Activated CD4-positive, alpha-beta T cell treated with anti-CD3 and anti-CD28 coated beads for 36 hours (primary cell): ENCODE measurements at regions of chr12 and their contacts with region 1.

Region 1: DNA sequence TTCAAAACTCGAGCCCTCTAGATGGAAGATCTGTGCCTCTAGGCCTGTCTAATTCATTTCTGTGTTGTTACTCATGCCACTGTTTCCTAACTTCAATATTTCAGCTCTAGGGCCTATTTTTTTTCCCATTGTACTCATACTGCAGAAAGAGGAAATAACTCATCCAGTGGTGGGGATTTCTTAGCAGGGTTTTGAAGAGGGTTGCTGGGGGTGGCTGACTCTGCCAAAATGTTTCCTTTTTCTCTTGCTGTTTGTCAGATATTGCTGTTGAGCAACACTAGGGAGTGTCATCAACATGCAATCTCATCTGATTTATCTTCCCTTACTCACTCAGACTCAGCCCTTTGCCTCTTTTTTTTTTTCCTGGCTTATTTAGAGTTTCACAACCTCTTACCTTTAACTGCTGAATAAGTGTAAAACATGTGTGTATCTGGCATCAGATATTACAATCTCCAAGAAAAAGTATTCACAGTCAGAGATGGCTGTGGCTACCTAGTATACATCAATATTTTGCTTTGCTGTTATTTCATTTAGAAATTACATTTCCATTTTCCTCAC is 189.5 kb downstream of the DUSP6 start:
- DNase-seq: peak; percentile 82
- ATAC-seq: peak; percentile 91
- H3K4me3 Mint-ChIP-seq: no peak overlapping the region
- H3K27ac Mint-ChIP-seq: no peak overlapping the region
- H3K4me1 Mint-ChIP-seq: peaks cover 14% of the 10 kb centered on the region
- H3K27me3 Mint-ChIP-seq: no peaks in the 10 kb centered on the region

Region 2: GRCh38 chr12:88793096-88793495 is 369.7 kb before region 1 on chr12:
- CTCF ChIA-PET with region 1: no interaction called
- POLR2A ChIA-PET with region 1: no interaction called
- intact Hi-C with region 1: no loop called
- DNase-seq: no peak
- ATAC-seq: no peak
- H3K4me3 Mint-ChIP-seq: no peak overlapping the region
- H3K27ac Mint-ChIP-seq: no peak overlapping the region
- H3K4me1 Mint-ChIP-seq: no peaks in the 10 kb centered on the region
- H3K27me3 Mint-ChIP-seq: peaks cover 2% of the 10 kb centered on the region

Region 3: GRCh38 chr12:89073027-89073398 is 89.8 kb before region 1 on chr12:
- CTCF ChIA-PET with region 1: interaction called, 3 read pairs
- POLR2A ChIA-PET with region 1: interaction called, 4 read pairs
- intact Hi-C with region 1: loop called (anchors 1 kb)
- DNase-seq: peak; percentile 42
- ATAC-seq: peak; percentile 20
- H3K4me3 Mint-ChIP-seq: no peak overlapping the region
- H3K27ac Mint-ChIP-seq: peak overlapping the region; percentile 91
- H3K4me1 Mint-ChIP-seq: peaks cover 44% of the 10 kb centered on the region
- H3K27me3 Mint-ChIP-seq: no peaks in the 10 kb centered on the region

Region 4: GRCh38 chr12:89179983-89180382 is 17.2 kb after region 1 on chr12:
- CTCF ChIA-PET with region 1: interaction called, 5 read pairs
- POLR2A ChIA-PET with region 1: interaction called, 4 read pairs
- intact Hi-C with region 1: loop called (anchors 1 kb)
- DNase-seq: no peak
- ATAC-seq: no peak
- H3K4me3 Mint-ChIP-seq: no peak overlapping the region
- H3K27ac Mint-ChIP-seq: peak overlapping the region; percentile 71
- H3K4me1 Mint-ChIP-seq: peaks cover 33% of the 10 kb centered on the region
- H3K27me3 Mint-ChIP-seq: no peaks in the 10 kb centered on the region

Region 5: DNA sequence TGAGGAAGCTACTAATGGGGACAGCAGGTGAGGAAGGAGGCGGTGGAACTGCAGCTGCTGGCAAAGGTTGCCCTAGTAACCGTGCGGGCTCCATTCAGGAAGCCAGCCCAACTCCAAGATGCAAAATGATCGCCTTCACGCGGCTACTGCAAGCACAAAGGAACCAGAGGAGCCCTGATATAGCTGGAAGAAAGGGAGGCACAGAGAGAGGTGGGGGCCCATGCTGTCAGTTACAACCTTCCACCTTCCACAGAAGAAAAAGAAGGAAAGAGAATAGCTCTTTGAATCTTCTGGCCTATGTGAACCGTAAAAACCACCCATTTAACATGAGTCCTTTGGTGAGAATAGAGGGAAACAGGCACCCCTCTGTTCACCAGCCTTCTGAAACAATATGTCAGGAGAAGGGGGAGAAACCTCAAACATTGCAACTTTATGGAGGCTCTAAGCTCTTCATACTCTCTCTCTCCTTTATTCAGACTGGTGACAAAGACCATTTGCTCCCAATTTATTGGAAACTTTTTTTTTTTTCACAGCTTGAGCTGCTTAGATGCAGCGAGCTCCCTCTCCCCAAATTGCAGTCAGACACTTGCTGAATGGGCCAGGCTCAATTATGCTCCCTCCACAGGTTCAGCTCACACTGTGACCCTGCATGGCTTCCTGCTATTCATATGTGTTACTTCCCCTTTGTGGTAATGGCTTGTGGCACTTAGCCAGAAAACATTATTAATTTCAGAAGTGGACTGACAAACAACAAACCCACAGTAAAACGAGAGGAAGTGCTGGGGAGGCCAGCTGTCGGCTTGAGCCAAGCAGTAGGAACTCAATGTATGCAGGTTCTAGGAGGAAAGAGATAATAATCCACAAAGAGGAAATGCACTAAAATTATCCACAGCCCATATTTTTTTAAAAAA is 183.3 kb after region 1 on chr12:
- CTCF ChIA-PET with region 1: no interaction called
- POLR2A ChIA-PET with region 1: no interaction called
- intact Hi-C with region 1: loop called in 1 of 2 experiments (anchors 1 kb)
- DNase-seq: peak; percentile 60
- ATAC-seq: peak; percentile 80
- H3K4me3 Mint-ChIP-seq: peak overlapping the region; percentile 51
- H3K27ac Mint-ChIP-seq: peak overlapping the region; percentile 82
- H3K4me1 Mint-ChIP-seq: peaks cover 55% of the 10 kb centered on the region
- H3K27me3 Mint-ChIP-seq: peaks cover 2% of the 10 kb centered on the region

Region 6: GRCh38 chr12:89524541-89525285 is 361.9 kb after region 1 on chr12 and contains the start of gene GALNT4:
- CTCF ChIA-PET with region 1: interaction called, 3 read pairs
- POLR2A ChIA-PET with region 1: interaction called, 3 read pairs
- intact Hi-C with region 1: loop called (anchors 5 kb)
- DNase-seq: peak; percentile 84
- ATAC-seq: peak; percentile 64
- H3K4me3 Mint-ChIP-seq: peak within 1 kb of the TSS; percentile 81
- H3K27ac Mint-ChIP-seq: peak within 1 kb of the TSS; percentile 94
- H3K4me1 Mint-ChIP-seq: peaks cover 53% of the 10 kb centered on the region
- H3K27me3 Mint-ChIP-seq: no peaks in the 10 kb centered on the region
- total RNA-seq, gene GALNT4: 3.0 to 4.6 TPM